Thyroid gland (tissue), 4 donors: ENCODE measurements at regions of chr17 and their contacts with region 1.

Region 1: DNA sequence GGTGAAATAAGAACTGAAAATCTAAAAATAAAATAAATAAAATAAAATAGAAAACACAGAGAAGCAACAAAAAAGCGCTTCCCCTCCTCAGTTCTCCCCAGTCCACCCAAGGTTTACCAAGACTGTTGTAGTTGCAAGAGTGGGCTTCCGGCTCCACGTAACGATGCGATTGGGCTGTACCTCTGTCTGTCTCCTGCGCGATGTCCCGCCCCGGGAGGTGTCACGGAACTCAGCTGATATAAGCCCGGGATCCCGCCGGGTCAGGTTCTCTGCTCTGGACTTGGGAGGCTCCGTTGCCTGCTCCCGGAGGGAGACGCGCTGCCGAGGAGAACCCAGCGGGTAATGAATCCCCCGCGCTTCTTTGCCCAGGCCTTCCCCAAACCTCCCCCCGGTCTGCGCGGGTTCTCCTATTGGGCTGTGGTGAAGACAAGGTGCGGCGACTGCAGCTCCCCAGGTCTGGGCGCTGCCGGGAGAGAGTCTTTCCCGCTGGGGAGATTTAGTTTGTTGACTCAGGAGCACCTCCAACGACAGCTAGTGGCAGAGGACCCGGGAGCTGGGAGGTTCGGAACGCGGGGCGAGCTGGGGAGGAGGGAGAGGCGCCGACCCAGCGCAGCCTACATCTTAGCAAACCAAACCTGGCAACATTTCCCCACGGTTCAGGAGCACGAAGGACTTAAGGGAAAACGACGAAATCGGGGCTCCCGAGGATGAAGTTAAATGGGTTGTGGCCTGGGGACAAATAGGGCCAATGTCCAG is at the start of gene SLFN5:
- DNase-seq: peak; percentile 97
- H3K4me3 ChIP-seq: peak within 1 kb of the TSS; percentile 34 to 96 (median 52)
- H3K27ac ChIP-seq: peak within 1 kb of the TSS; percentile 87 to 99 (median 98)
- H3K4me1 ChIP-seq: peaks cover 18 to 19% of the 10 kb centered on the region in 2 donors
- H3K27me3 ChIP-seq: no peaks in the 10 kb centered on the region
- CTCF ChIP-seq: no peak
- POLR2A ChIP-seq: peak; percentile 95 to 98
- total RNA-seq, gene SLFN5: 12.1 to 30.1 (median 17.7) TPM

Region 2: DNA sequence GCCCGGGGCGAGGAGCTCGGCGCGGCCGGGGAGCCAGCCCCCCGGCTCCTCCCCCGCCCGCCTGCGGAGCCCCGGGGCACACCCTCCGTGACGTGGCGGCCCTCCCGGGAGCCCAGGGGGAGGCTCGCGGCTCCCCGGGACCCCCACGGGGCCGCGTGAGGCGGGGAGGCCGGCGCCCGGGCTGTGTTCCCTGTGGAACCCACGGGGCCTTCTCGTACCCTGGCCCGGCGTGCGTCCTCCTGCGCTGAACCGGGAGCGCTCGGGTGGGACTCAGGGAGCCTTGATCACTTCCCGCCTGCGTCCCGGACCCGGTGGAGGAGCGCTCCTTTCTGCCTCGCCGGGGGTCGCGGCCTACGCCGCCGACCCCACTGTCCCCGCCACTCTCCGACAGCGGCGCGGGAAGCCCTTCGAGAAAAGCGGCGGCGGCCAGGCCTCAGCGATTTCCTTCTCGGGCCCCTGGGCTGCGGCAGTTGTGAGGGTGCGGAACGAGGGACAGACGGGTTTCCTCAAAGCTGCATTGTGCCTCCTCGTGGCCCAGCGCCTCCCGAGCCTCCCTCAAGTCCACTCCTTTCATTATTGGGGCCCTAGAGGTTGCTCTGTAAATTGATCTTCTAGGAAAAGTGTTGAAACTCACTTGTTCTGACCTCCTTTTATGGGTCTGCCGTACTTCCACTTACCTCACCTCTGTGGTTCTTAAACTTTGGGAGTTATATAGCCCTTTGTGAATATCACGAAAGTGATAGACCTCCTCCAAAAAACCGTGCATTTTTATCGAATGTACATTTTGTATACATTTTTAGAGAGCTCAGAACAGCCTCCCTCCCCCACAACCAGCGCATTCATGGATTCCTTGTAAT is 262.1 kb before region 1 on chr17:
- intact Hi-C with region 1: loop called (anchors 10 kb)
- DNase-seq: peak; percentile 71 to 77
- H3K4me3 ChIP-seq: peak overlapping the region; percentile 67 to 87 (median 86)
- H3K27ac ChIP-seq: peak overlapping the region; percentile 98 to 99 (median 99)
- H3K4me1 ChIP-seq: peaks cover 13 to 16% of the 10 kb centered on the region in 2 donors
- H3K27me3 ChIP-seq: no peaks in the 10 kb centered on the region
- CTCF ChIP-seq: peak in 4 of 6 experiments; percentile 12 to 45 (median 34)
- POLR2A ChIP-seq: peak in 1 of 2 donors; percentile 54

Region 3: GRCh38 chr17:35185849-35186248 is 57.1 kb before region 1 on chr17:
- intact Hi-C with region 1: no loop called
- DNase-seq: no peak
- H3K4me3 ChIP-seq: no peak overlapping the region
- H3K27ac ChIP-seq: no peak overlapping the region
- H3K4me1 ChIP-seq: no peaks in the 10 kb centered on the region
- H3K27me3 ChIP-seq: no peaks in the 10 kb centered on the region
- CTCF ChIP-seq: no peak
- POLR2A ChIP-seq: no peak

Region 4: DNA sequence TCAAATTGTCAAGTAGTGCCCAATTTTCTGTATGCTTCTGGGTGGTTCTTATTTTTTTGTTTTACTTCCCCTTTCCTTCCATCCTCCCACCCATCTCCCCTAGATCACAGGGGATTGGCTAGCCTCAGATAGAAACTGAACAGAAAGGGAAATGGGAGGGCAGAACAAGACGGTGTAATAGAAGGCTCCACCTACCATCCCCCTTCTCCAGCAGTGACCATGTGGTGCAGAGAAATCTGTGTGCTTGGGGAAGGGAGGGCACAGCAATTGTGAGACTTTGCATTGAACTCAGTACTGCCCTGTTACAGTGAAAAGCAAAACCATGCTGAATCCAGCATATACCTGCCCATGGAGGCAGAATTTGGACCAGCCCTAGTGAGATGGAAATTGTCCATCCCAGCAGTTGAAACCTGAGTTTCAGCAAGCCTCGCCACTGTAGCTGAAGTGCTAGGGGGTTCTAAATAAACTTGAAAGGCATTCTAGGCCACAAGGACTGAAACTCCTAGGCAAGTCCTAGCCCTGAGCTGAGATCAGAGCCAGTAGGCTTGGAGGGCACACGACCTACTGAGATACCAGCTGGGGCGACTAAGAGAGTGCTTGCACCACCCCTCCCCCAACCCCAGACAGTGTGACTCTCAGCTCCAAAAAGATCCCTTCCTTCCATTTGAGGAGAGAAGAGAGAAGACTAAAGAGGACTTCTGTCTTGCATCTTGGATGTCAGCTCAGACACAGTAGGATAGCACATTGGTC is 125.3 kb after region 1 on chr17:
- intact Hi-C with region 1: loop called (anchors 10 kb)
- DNase-seq: no peak
- H3K4me3 ChIP-seq: no peak overlapping the region
- H3K27ac ChIP-seq: no peak overlapping the region
- H3K4me1 ChIP-seq: peaks cover 0 to 16% of the 10 kb centered on the region in 2 donors
- H3K27me3 ChIP-seq: no peaks in the 10 kb centered on the region
- CTCF ChIP-seq: no peak
- POLR2A ChIP-seq: no peak

Region 5: DNA sequence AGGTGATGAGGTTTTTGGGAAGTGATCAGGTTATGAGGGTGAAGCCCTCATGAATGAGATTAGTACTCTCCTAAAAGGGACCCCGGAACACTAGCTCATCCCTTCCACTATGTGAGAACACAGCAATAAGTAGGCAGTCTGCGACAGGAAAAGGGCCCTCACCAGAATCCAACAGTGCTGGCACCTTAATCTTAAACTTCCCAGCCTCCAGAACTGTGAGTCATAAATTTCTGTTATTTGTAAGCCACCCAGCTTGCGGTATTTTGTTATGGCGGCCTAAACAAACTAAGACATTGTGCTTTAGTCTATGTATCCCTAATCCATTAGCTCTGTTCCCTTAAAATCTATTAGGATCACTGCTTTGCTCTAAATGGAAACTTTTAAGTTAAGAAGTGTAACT is 180.8 kb after region 1 on chr17:
- intact Hi-C with region 1: loop called (anchors 10 kb)
- DNase-seq: no peak
- H3K4me3 ChIP-seq: no peak overlapping the region
- H3K27ac ChIP-seq: no peak overlapping the region
- H3K4me1 ChIP-seq: no peaks in the 10 kb centered on the region
- H3K27me3 ChIP-seq: no peaks in the 10 kb centered on the region
- CTCF ChIP-seq: no peak
- POLR2A ChIP-seq: no peak

Region 6: GRCh38 chr17:35568541-35568940 is 325.6 kb after region 1 on chr17:
- intact Hi-C with region 1: loop called (anchors 10 kb)
- DNase-seq: peak; percentile 21 to 22
- H3K4me3 ChIP-seq: peak overlapping the region; percentile 18 to 56 (median 51)
- H3K27ac ChIP-seq: peak overlapping the region in 2 of 3 donors; percentile 53 to 72
- H3K4me1 ChIP-seq: peaks cover 15 to 27% of the 10 kb centered on the region in 2 donors
- H3K27me3 ChIP-seq: no peaks in the 10 kb centered on the region
- CTCF ChIP-seq: no peak
- POLR2A ChIP-seq: no peak